ENCODE measurements at regions of chr15 and their contacts with region 1.

Region 1: GRCh38 chr15:33292717-33293307 is 18.0 kb upstream of the RYR3 start:
- DNase-seq: peak; percentile 51
- H3K4me3 Mint-ChIP-seq: no peak overlapping the region
- H3K27ac Mint-ChIP-seq: no peak overlapping the region
- H3K4me1 Mint-ChIP-seq: no peaks in the 10 kb centered on the region
- H3K27me3 Mint-ChIP-seq: peaks cover 2% of the 10 kb centered on the region

Region 2: DNA sequence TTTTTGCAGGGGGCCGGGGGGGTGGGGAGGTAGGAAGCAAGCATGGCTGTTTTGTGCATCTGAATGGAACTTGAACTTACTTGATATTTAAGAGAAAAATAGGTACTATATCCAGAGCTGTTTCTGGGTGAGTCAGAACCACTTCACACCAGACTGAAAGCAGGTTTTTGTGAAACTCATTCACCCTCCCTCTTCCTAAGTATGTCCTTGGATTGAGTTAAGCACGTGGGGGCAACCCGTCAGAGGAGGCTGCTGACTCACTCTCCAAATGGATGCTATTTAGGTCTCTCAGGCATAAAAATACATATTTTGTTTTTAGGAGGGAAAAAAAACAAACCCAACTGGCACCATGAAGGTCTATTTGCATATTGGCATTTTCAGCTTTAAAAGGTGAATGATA is 288.2 kb after region 1 on chr15:
- CTCF ChIA-PET with region 1: no interaction called
- POLR2A ChIA-PET with region 1: no interaction called
- intact Hi-C with region 1: no loop called
- DNase-seq: no peak
- H3K4me3 Mint-ChIP-seq: no peak overlapping the region
- H3K27ac Mint-ChIP-seq: no peak overlapping the region
- H3K4me1 Mint-ChIP-seq: no peaks in the 10 kb centered on the region
- H3K27me3 Mint-ChIP-seq: no peaks in the 10 kb centered on the region

Region 3: DNA sequence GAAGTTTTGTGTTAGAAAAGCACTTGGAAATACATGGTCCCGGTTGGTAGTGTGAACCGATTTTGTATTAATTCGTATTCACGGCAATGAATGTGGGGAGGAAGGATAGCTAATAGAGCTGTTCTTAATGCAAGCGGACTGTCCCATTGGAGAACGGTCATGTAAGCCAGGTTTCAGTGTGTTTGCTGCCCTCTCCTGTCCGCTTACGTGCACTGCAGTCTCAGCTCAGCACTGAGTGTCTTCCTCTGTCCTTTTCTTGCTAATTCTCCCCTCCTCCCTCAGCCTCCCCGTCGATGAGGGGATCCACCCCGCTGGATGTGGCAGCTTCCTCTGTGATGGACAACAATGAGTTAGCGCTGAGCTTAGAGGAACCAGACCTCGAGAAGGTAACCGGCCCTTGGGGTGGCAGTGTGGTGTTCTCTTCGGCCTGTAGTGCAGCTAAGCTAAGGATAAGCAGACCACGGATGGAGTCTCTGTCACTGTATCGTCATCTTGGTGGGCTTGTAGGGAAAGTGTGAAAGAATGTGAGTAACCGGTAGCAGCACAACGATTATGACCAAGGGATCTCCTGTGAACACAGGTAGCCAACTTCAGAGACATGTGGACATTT is 408.0 kb after region 1 on chr15:
- CTCF ChIA-PET with region 1: interaction called, 57 read pairs
- POLR2A ChIA-PET with region 1: no interaction called
- intact Hi-C with region 1: loop called (anchors 2 kb)
- DNase-seq: peak; percentile 71
- H3K4me3 Mint-ChIP-seq: no peak overlapping the region
- H3K27ac Mint-ChIP-seq: no peak overlapping the region
- H3K4me1 Mint-ChIP-seq: no peaks in the 10 kb centered on the region
- H3K27me3 Mint-ChIP-seq: peaks cover 12% of the 10 kb centered on the region

Measured in activated CD4-positive, alpha-beta memory T cell treated with anti-CD3 and anti-CD28 coated beads for 36 hours (primary cell).